ENCODE measurements at regions of chr7 and their contacts with region 1.

Region 1: GRCh38 chr7:8190119-8190895 is 71.7 kb downstream of the ICA1 start:
- DNase-seq: peak in 1 of 2 experiments; percentile 43
- ATAC-seq: peak; percentile 71 to 80
- H3K4me3 ChIP-seq: no peak overlapping the region
- H3K27ac ChIP-seq: no peak overlapping the region
- H3K4me1 ChIP-seq: no peaks in the 10 kb centered on the region
- CTCF ChIP-seq: peak; percentile 76
- EP300 ChIP-seq: no peak
- POLR2A ChIP-seq: no peak
- RAD21 ChIP-seq: peak; percentile 70 to 74

Region 2: GRCh38 chr7:8177109-8177933 is 13.0 kb before region 1 on chr7:
- CTCF ChIA-PET with region 1: interaction called, 11 read pairs
- POLR2A ChIA-PET with region 1: no interaction called
- DNase-seq: no peak
- ATAC-seq: no peak
- H3K4me3 ChIP-seq: no peak overlapping the region
- H3K27ac ChIP-seq: no peak overlapping the region
- H3K4me1 ChIP-seq: no peaks in the 10 kb centered on the region
- CTCF ChIP-seq: no peak
- EP300 ChIP-seq: no peak
- POLR2A ChIP-seq: no peak
- RAD21 ChIP-seq: no peak

Region 3: DNA sequence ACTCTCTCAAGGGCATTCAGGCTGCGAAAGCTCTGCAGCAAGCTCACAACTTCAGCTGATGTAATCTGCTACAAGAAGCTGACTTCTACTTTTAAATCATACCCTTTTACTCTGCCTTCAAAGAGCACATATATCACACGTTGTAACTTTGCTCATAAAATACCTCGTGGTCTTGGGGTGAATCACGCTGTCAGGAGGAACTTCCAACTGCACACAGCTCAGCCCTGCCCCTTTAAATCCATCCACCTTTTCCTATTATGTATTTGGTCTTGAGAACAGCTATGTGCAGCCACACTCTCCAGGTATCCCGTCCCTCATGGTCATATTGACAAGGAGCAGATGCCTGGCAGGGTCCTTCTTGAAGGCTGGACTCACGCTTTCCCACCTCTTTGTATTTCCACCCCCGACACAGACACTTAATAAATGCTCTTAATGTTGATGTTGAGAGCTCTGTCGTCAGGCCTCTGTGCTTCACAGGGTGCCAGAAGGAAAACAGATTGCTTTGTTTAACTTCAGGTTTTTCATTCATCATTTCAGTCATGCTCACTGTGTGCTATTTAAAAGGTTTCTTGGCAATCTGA is 24.0 kb after region 1 on chr7:
- CTCF ChIA-PET with region 1: interaction called, 10 read pairs
- POLR2A ChIA-PET with region 1: no interaction called
- DNase-seq: no peak
- ATAC-seq: 0 out of 6 replicates have a peak, but pooled peaks of 1 of the 2 experiments have one; percentile 30
- H3K4me3 ChIP-seq: no peak overlapping the region
- H3K27ac ChIP-seq: no peak overlapping the region
- H3K4me1 ChIP-seq: no peaks in the 10 kb centered on the region
- CTCF ChIP-seq: no peak
- EP300 ChIP-seq: no peak
- POLR2A ChIP-seq: no peak
- RAD21 ChIP-seq: no peak

Measured in A549 (cell line).